ENCODE measurements at regions of chr3 and their contacts with region 1.

Region 1: GRCh38 chr3:197224034-197224444 is 74.4 kb downstream of the DLG1 start:
- DNase-seq: peak; percentile 53 to 77 (median 72)
- H3K4me3 ChIP-seq: no peak overlapping the region
- H3K27ac ChIP-seq: no peak overlapping the region
- H3K4me1 ChIP-seq: peaks cover 0 to 4% (median 1%) of the 10 kb centered on the region in 4 experiments
- H3K27me3 ChIP-seq: no peaks in the 10 kb centered on the region

Region 2: DNA sequence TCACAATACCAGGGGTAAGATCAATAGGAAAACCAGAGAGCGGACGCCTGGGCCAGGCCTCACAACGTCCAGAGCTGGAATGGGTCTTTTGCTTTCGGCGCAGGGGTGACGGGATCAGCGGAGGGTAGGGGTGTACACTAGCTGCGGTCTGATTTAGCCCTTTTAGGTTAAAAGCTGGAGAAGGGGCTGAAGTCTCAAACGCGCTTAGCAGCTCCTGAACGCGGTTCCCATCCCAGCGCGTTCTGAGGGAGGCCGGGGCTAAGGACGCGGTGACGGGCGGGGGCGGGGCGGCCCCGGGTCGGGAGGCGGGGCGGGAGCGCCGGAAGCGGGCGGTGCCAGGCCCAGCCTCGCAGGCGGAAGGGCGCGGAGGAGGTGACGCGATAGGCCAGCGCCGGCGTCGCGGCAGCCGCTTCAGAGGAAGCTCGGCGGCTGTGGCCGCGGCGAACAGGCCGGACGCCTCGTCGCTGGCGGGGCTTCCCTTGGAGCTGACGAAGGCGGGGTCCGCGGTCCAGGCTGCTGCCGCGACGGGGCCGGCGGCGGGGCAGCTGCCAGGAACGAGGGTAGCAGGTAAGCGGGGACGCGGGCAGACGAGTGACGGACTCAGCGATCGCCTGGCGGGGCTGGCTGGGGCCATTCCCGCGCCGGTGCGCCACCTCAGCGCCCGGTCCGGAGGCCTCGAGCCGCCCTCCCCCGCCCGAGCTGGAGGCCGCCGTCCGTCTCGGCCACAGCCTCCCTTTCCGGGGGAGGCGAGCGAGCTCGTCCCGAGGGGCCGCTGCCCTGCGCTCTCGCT is 356.3 kb before region 1 on chr3 and contains the start of gene SENP5:
- CTCF ChIA-PET with region 1: no interaction called
- POLR2A ChIA-PET with region 1: no interaction called
- DNase-seq: peak; percentile 90 to 95 (median 94)
- H3K4me3 ChIP-seq: peak within 1 kb of the TSS; percentile 86 to 99 (median 96)
- H3K27ac ChIP-seq: peak within 1 kb of the TSS; percentile 88 to 93
- H3K4me1 ChIP-seq: peaks cover 4 to 23% (median 17%) of the 10 kb centered on the region in 4 experiments
- H3K27me3 ChIP-seq: no peaks in the 10 kb centered on the region

Region 3: DNA sequence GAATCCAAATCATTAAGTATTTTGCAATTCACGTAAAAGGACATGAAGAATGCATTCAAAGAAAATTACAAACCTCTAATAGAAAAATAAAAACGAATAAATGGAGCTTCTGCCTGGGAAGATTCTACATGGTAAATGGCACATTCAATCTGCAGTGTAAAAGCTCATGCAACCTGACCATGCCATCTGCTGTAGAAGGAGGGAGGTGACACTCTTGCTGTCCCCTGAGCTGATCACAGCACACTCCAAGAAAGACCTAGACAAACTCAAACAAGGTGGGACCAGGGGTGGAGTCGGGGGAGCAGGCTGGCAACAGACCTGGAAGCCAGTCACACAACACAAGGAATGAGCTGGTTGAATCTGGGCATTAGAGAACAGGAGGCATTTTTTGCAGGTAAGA is 230.0 kb after region 1 on chr3:
- CTCF ChIA-PET with region 1: interaction called, 12 read pairs
- POLR2A ChIA-PET with region 1: no interaction called
- DNase-seq: peak; percentile 41 to 71 (median 62)
- H3K4me3 ChIP-seq: no peak overlapping the region
- H3K27ac ChIP-seq: no peak overlapping the region
- H3K4me1 ChIP-seq: peaks cover 0 to 15% (median 12%) of the 10 kb centered on the region in 4 experiments
- H3K27me3 ChIP-seq: peaks cover 0 to 10% (median 2%) of the 10 kb centered on the region in 5 experiments

Region 4: DNA sequence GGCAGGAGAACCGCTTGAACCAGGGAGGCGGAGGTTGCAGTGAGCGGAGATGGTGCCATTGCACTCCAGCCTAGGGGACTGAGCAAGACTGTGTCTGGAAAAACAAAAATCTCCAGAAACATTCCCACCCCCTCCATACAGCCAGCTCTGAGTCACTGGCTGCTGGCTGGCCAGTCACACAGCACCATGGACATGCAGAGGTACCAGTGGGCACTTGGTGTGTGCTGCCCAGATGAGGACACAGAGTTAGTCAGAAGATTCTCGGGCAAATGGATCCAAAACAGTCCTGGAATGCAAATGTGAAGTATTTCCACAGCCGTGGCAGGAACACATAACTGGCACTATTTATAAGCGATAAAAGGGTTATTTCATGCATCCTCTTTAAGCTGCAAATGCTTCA is 287.1 kb after region 1 on chr3:
- CTCF ChIA-PET with region 1: interaction called, 14 read pairs
- POLR2A ChIA-PET with region 1: no interaction called
- DNase-seq: no peak
- H3K4me3 ChIP-seq: no peak overlapping the region
- H3K27ac ChIP-seq: no peak overlapping the region
- H3K4me1 ChIP-seq: peaks cover 0 to 9% (median 7%) of the 10 kb centered on the region in 4 experiments
- H3K27me3 ChIP-seq: peaks cover 0 to 3% (median 0%) of the 10 kb centered on the region in 5 experiments